ENCODE measurements at regions of chr11 and their contacts with region 1.

Region 1: DNA sequence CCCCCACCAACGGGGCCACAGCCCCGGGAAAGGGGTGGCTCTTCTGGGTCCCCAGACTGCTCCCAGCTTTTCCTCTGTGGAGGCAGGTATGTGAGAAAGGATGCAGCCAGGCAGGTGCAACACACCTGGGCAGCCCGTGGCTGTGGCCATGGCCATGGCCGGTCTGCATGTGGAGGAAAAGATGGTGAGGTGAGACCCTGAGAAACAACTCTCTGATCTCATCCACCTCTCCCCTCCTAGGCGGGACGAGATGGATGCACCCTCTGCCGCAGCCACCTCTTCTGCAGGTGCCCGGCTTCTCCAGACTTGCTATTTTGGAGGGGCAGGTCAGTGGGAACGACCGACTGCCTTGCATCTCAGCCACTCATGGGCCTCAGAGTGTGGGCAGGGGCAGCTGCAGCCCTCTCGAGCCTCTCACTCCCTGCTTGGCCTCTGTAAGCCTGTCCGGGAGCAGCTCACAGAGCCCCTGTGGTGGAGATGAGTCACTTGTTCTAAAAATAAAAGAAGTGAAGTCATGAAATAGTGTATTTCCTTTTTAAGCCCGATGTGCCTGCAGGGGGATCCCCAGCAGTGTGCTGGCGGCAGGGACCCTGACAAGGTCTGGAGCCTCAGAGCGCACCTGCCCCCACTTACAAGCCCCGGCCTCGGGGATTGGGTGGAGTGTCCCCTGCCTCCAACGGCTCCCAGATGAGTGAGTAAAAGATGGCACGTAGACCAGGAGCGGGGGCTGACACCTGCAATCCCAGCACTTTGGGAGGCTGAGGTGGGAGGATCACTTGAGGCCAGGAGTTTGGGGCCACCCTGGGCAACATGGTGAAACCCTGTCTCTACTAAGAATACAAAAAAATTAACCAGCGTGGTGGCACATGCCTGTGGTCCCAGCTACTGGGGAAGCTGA is 10.7 kb downstream of the SMIM38 start:
- DNase-seq: peak; percentile 24
- H3K4me3 Mint-ChIP-seq: peak overlapping the region; percentile 45
- H3K27ac Mint-ChIP-seq: peak overlapping the region; percentile 79
- H3K4me1 Mint-ChIP-seq: peaks cover 13% of the 10 kb centered on the region
- H3K27me3 Mint-ChIP-seq: peaks cover 12% of the 10 kb centered on the region

Region 2: DNA sequence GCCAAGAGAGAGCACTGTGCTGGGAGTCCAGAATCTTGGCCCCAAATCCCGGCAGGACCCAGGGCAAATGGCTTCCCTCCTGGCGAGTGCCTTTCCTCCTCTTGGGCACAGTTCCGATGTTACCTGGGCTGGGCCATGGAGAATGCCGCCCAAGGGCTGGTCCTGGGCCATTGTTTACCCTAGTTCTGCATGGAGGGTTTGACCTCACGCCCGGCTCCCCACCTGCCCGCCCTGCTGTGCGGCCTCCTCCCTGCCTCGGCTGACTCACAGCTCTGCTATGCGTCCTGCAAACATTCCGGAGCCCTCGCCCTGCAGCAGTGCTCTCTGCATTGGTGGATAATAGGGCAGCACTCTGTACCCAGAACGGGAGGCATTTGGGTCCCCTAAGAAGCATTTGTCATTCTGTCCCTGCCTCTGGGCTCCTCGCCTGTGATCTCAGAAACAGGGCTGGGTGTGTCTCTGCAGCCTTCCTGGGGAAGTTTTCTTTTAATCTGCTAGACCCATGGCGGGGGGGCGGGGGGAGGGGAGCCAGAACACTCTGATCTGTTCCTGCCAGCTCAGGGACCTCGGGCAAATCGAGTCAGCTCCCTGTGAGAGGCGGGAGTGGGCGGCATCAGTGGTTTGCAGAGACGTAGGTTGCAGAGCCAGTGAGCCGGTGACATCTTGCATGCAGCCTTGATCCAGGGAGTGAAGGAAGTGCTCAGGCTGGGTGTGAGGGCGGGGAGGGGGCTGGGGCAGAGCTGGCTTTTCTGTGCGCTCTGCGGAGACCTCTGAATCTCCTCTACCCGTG is 43.6 kb before region 1 on chr11:
- intact Hi-C with region 1: loop called (anchors 5 kb)
- DNase-seq: peak; percentile 44
- H3K4me3 Mint-ChIP-seq: peak overlapping the region; percentile 62
- H3K27ac Mint-ChIP-seq: peak overlapping the region; percentile 80
- H3K4me1 Mint-ChIP-seq: peaks cover 26% of the 10 kb centered on the region
- H3K27me3 Mint-ChIP-seq: no peaks in the 10 kb centered on the region

Region 3: GRCh38 chr11:69238573-69239351 is 72.3 kb after region 1 on chr11:
- intact Hi-C with region 1: loop called (anchors 2 kb)
- DNase-seq: no peak
- H3K4me3 Mint-ChIP-seq: peak overlapping the region; percentile 2
- H3K27ac Mint-ChIP-seq: peak overlapping the region; percentile 85
- H3K4me1 Mint-ChIP-seq: peaks cover 22% of the 10 kb centered on the region
- H3K27me3 Mint-ChIP-seq: peaks cover 2% of the 10 kb centered on the region